Left cardiac atrium (tissue), 4 donors: ENCODE measurements at regions of chr19 and their contacts with region 1.

Region 1: DNA sequence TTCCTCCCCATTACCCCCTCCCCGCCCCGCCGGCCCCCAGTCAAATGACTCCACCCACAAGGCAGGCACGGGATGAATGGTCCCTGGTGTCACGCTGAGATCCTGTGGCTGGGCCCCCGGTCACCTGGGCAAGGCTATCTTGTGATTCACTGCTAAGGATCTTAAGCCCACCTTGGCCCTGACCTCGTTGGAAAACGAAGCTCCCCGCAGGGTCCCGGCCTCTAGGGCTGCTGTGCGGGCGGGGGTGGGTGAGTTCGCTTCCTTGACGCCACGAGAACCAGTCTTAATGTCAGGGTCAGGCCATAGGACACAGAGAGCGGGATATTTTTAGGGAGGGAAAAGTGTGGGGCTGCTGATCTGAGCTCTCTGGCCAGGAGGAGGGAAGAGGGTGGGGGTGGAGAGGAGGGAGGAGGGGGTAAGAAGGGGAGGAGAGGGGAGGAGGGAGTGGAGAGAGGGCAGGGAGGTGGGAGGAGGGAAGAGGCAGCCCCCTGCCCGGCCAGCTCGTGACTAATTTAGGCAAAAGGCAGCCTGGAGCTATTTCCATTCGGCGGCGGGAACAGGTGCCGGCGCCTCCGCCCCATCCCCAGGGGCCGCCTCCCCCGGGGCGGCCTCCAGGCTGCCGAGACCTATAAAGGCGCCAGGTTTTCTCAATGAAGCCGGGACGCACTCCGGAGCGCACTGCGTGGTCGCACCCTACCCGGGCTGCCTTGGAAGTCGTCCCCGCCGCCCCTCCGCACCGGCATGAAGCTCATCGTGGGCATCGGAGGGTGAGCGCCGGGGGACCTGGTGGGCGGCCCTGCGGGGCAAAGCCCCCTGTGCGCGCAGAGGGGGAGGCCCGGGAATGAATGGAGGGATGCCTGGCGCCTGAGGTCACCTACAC is at the start of gene NMRK2:
- DNase-seq: peak; percentile 65
- ATAC-seq: peak; percentile 67 to 75
- total RNA-seq, gene NMRK2: 1,098 to 1,409 TPM

Region 2: DNA sequence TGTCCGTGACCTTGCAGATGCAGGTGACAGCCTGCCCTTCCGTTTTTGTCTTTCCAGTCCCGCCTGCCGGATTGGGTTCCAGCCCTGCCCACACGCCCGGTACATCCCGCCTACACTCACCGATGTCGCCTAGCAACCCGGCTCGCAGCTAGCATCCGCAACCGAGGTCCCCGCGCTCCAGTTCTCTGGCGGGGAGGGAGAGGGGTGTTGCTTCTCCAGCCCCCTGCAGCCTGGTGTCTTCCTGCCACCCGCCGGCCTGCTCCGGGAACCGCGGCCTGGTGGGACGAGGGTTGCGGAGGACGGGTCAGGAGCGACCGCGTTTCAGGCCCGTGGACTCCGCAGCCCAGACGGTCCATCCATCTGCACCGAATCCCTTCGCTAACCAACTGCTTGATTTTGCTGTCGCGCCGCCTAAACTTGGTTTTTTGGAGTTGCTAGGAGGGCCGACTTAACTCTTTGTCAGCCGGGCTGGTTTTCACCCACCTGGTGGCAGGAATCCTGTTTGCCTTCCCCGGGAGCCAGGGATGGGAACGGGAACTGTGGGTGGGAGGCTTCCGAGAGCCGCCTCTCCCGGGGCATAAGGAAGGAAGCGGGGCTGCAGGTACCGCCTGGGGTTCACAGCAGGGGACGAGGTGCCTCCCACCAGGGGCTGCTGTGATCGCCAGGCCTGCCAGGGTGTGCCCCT is 131.6 kb before region 1 on chr19:
- intact Hi-C with region 1: no loop called
- DNase-seq: peak; percentile 53
- ATAC-seq: peak; percentile 59 to 65

Region 3: DNA sequence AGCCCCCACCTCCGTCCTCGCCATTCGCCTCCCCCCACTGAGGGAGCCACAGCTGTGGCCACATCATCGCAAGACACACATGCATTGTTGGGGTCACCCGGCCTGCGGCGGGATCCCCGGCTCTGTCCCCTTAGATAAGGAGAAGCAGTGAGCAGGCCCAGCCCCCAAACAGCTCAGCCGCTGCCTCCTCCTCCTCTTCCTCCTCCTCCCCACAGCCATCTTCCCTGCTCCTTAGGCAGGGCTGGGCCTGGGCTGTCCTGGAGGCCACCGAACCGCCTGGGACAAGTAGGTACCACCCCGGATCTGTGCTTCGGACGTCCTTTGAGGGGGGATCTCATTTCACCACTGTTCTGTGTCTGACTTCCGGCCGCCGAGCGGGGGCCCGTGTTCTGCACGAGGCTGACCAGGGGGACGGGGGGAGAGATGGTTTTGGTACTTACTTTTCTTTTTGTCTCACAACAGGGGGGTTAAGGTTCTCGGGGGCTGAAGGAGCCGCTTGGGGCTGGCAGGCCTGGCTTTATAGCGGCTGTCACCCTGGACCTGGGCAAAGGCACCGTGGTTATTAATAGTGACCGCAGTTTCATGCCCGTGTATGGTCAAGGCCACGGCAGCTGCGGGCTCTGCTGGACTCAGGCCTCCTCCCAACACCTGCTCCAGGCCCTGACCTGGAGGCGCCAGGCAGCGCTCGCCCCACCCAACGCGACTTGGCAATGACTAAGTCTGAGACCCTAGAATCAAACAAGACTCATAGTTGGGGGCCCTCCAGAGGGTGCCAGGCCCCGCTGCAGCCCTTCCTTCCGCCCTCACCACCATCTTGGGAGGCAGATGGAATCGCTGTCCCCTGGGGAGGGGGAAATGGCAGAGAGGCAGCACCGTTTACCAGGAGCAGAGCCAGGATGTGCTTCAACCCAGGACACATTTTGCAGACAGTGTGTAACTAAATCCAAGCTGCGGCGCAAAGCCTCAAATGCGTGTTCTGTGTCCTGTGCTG is 18.0 kb after region 1 on chr19:
- intact Hi-C with region 1: loop called in 1 of 2 experiments (anchors 2 kb)
- DNase-seq: peak; percentile 66
- ATAC-seq: peak; percentile 69 to 82

Region 4: DNA sequence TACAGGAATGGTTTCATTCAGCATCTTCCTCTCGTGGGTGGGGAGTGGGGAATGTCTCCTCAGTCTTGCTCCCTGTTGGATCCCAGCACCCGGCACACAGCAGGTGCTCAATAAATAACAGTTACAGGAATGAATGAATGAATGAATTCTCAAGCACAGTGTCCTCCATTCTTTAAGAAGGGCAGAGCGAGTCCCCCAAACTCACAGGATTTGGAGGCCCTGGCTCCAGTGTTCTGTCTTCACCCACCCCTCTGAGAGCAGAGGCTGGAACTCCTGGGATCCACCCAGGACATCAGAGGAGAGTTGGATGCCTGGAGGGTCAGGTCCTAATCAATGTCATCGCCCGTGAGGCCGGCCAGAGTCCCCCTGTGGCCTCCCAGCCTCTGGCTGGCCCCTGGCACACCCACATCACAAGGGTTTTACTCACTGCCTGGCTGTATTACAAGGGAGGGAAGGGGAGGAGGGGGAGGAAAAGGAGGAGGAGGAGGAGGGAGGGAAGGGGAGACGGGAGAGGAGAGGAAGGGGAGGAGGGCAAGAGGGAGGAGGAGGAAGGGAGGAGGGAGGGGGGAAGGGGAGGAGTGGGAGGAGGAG is 211.6 kb after region 1 on chr19:
- intact Hi-C with region 1: no loop called
- DNase-seq: no peak
- ATAC-seq: peak in 1 of 2 donors; percentile 49